ENCODE measurements at regions of chr17 and their contacts with region 1.

Region 1: GRCh38 chr17:15236281-15237105 is 28.6 kb downstream of the PMP22 start:
- DNase-seq: no peak
- H3K4me3 ChIP-seq: no peak overlapping the region
- H3K27ac ChIP-seq: no peak overlapping the region
- H3K4me1 ChIP-seq: no peaks in the 10 kb centered on the region
- H3K27me3 ChIP-seq: no peaks in the 10 kb centered on the region
- CTCF ChIP-seq: no peak
- POLR2A ChIP-seq: no peak

Region 2: GRCh38 chr17:13385481-13385911 is 1851.0 kb before region 1 on chr17:
- intact Hi-C with region 1: no loop called
- DNase-seq: no peak
- H3K4me3 ChIP-seq: no peak overlapping the region
- H3K27ac ChIP-seq: no peak overlapping the region
- H3K4me1 ChIP-seq: no peaks in the 10 kb centered on the region
- H3K27me3 ChIP-seq: no peaks in the 10 kb centered on the region
- CTCF ChIP-seq: no peak
- POLR2A ChIP-seq: no peak

Region 3: DNA sequence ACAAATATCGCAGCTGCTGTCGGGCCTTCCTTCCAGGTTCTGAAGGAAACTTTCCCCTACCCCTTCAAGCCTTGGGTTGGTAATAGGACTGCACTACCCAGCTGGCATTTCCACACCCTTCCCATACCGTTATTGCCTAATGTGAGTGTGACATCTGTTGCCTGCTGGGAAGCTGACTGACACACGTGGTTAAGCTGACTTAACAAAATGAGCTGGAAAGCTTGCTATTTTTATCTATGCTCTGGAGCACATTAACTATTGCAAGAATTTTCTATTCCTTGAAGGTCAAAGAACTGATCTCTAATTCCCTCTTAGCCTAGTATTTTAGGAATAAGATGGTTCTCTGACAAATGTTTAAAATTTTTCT is 50.9 kb before region 1 on chr17:
- intact Hi-C with region 1: loop called (anchors 2 kb)
- DNase-seq: no peak
- H3K4me3 ChIP-seq: no peak overlapping the region
- H3K27ac ChIP-seq: peak overlapping the region in 1 of 2 donors; percentile 9
- H3K4me1 ChIP-seq: no peaks in the 10 kb centered on the region
- H3K27me3 ChIP-seq: no peaks in the 10 kb centered on the region
- CTCF ChIP-seq: no peak
- POLR2A ChIP-seq: no peak

Region 4: DNA sequence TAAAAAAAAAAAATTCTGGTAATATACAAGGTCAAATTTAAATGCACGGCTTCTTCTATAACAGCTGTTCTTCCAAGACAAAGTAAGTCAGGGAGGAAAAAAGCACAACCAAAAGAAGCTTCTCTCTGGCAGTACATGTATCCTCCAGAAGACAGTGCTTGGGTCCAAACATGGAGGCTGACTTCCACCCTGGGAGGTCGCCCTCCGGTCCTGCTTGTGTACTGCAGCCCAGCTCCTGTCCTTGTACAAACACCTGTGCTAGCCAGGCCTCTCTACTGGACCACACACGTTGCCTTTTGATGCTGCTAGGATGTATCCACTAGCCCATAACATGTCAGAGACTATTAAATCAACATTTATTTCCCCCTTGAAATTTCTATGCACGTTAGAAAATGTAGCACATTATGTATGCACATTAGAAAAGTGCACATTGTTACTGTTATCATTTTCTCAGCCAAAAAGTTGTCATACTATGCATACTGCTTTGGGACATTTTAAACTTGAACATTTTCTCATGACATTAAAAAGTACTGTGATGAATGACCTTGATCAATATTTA is 83.0 kb after region 1 on chr17:
- intact Hi-C with region 1: no loop called
- DNase-seq: no peak
- H3K4me3 ChIP-seq: no peak overlapping the region
- H3K27ac ChIP-seq: no peak overlapping the region
- H3K4me1 ChIP-seq: no peaks in the 10 kb centered on the region
- H3K27me3 ChIP-seq: no peaks in the 10 kb centered on the region
- CTCF ChIP-seq: no peak
- POLR2A ChIP-seq: no peak

Region 5: GRCh38 chr17:17227608-17228501 is 1991.4 kb after region 1 on chr17:
- intact Hi-C with region 1: no loop called
- DNase-seq: peak in 1 of 2 donors; percentile 32
- H3K4me3 ChIP-seq: no peak overlapping the region
- H3K27ac ChIP-seq: no peak overlapping the region
- H3K4me1 ChIP-seq: no peaks in the 10 kb centered on the region
- H3K27me3 ChIP-seq: no peaks in the 10 kb centered on the region
- CTCF ChIP-seq: no peak
- POLR2A ChIP-seq: no peak

Measured in breast epithelium (tissue), 4 donors.